ENCODE measurements at regions of chr9 and their contacts with region 1.

Region 1: DNA sequence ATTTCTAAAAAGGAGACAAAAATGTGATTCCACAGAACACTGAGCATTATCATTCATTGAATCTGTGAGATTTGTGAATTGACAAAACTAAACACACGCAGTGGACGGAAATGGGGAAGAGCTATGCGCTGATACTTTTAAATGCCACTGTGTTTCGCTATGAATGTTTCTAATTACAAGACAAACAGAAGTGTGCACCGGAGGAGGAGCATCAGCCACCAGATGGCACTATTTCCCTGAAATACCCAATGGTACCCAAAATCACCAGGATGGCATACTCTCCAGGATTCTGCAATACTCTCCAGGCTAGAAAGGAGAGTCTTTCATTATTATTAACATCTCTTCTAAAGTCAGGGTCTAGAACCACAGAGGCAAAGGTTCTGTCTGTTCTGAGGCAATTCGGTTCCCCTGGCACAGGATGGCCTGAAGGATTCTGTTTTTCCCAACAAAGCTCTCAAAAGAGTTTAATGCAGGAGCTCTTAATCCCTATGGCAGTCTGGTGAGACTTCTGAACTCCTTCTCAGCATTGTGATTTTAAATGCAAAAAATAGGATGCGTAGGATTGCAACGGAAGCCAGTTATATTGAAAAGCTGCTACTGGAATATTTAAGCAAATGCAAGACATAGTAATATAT is 13.8 kb upstream of the PUM3 start:
- DNase-seq: peak; percentile 76
- H3K4me3 ChIP-seq: peak overlapping the region in 1 of 2 experiments; percentile 34; a peak in 1 of 4 replicates
- H3K27ac ChIP-seq: no peak overlapping the region
- H3K4me1 ChIP-seq: no peaks in the 10 kb centered on the region
- H3K27me3 ChIP-seq: peaks cover 22% of the 10 kb centered on the region
- CTCF ChIP-seq: peak; percentile 92
- EP300 ChIP-seq: no peak
- RAD21 ChIP-seq: peak; percentile 88

Region 2: DNA sequence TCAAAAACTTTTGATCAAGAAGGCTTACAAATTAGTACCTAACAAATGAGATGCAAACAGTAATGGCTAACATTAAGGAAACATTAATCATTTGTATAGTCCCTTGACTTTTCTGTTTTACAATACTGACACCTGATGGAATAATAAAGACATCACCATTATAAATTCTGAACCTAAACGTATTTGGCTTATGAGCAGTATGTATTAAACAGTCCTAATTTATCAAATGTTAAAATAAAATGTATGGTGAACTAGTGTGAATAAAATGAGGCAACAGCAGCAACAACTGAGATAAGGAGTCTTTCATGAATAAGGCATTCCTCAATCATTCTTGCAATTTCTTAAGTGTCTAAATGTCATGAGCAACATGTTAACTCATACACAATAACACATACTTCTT is 19.8 kb before region 1 on chr9:
- CTCF ChIA-PET with region 1: interaction called, 41 read pairs
- POLR2A ChIA-PET with region 1: no interaction called
- DNase-seq: peak; percentile 12
- H3K4me3 ChIP-seq: no peak overlapping the region
- H3K27ac ChIP-seq: no peak overlapping the region
- H3K4me1 ChIP-seq: peaks cover 13 to 23% of the 10 kb centered on the region in 2 experiments; a peak in 3 of 4 replicates
- H3K27me3 ChIP-seq: no peaks in the 10 kb centered on the region
- CTCF ChIP-seq: peak; percentile 58
- EP300 ChIP-seq: no peak
- RAD21 ChIP-seq: peak; percentile 58

Region 3: DNA sequence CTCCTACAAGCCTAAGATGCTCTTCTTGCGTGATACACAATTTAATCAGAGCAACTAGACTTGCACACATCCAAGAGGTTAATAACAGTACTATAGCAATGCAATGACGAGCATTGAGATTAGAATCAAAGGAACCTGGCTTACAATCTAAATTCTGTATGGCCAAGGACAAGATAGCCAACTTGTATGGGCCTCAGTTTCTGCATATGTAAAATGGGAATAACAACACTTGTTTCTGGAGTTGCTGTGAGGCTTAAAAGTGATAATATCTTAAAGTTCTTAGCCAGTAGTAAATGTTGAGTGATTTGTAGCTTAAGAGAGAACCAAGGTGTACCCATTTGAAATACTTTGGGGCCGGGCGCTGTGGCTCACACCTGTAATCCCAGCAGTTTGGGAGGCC is 11.6 kb before region 1 on chr9:
- CTCF ChIA-PET with region 1: interaction called, 41 read pairs
- POLR2A ChIA-PET with region 1: no interaction called
- DNase-seq: no peak
- H3K4me3 ChIP-seq: no peak overlapping the region
- H3K27ac ChIP-seq: no peak overlapping the region
- H3K4me1 ChIP-seq: peaks cover 21 to 23% of the 10 kb centered on the region in 2 experiments; a peak in 3 of 4 replicates
- H3K27me3 ChIP-seq: no peaks in the 10 kb centered on the region
- CTCF ChIP-seq: no peak
- EP300 ChIP-seq: no peak
- RAD21 ChIP-seq: no peak

Region 4: GRCh38 chr9:2872257-2872935 is 14.7 kb after region 1 on chr9:
- CTCF ChIA-PET with region 1: interaction called, 22 read pairs
- POLR2A ChIA-PET with region 1: no interaction called
- DNase-seq: peak; percentile 27
- H3K4me3 ChIP-seq: no peak overlapping the region
- H3K27ac ChIP-seq: no peak overlapping the region
- H3K4me1 ChIP-seq: no peaks in the 10 kb centered on the region
- H3K27me3 ChIP-seq: peaks cover 28% of the 10 kb centered on the region; the same call in 1 of the 2 replicates
- CTCF ChIP-seq: peak; percentile 52
- EP300 ChIP-seq: no peak
- RAD21 ChIP-seq: peak; percentile 58

Region 5: DNA sequence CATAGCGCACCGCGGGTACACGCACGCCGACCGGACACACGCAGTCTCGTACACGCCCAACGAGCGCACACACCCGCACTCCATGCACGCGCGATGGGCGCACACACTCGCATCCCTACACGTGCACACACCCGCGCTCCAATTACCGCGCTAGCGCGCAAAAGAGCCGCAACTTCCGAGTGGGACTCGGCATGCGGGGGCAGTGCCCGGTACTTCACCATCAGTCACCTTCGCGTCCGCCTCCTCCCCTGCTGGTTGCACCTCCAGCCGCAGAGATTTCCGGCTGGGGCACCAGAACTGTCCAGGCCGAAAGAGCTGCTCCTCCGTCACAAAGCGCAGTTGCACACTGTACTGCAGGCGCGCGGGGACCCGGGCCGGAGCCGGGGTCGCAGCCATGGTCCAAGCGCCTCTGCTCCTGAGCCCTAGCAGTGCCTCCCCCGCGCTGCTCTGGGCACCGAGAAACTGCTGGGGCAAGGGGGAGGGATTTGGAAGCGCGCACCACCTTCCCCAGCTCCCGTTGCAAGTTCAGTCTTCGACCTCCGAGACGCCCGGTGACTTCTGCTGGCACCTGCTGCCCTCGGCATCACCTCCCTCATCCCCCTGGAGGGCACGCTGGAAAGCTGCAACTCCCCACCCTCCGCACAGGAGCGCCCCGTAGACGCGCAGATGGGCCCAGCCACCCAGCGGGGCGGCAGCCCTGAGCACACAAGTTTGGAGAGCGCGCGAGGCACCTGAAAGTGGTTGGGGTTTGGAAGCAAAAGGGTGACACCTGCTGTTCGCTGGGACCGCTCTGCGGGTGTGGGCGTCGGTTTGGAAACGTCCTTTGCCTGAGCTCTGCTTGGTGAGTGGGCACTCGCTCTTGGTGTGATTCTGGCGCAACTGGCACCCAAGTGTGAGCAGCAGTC is 323.6 kb after region 1 on chr9:
- CTCF ChIA-PET with region 1: interaction called, 13 read pairs
- POLR2A ChIA-PET with region 1: no interaction called
- DNase-seq: peak; percentile 39
- H3K4me3 ChIP-seq: peak overlapping the region in 1 of 2 experiments; percentile 19; a peak in 2 of 4 replicates
- H3K27ac ChIP-seq: no peak overlapping the region
- H3K4me1 ChIP-seq: no peaks in the 10 kb centered on the region
- H3K27me3 ChIP-seq: peaks cover 27% of the 10 kb centered on the region; the same call in 1 of the 2 replicates
- CTCF ChIP-seq: 0 out of 2 replicates have a peak, but pooled peaks have one; percentile 27
- EP300 ChIP-seq: no peak
- RAD21 ChIP-seq: peak; percentile 44

Region 6: DNA sequence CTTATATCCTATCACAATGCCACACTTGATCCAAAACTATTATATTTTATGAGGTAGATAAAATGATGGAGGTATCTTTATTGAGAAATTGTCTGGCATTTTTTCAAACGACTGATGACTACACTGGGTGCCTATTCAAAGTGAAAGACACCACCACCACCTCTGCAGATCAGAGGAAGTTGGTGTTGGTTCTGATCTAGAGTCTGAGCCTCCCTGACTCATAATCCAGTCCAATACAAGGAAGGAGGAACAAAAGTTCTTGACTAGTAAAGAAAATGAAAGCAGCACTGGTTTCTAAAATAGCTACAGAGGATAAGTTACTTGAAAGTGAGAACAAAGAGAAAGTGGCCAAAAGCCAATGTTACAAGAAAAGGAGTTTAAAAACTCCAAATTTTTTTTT is 528.2 kb after region 1 on chr9:
- CTCF ChIA-PET with region 1: no interaction called
- POLR2A ChIA-PET with region 1: no interaction called
- DNase-seq: no peak
- H3K4me3 ChIP-seq: no peak overlapping the region
- H3K27ac ChIP-seq: no peak overlapping the region
- H3K4me1 ChIP-seq: no peaks in the 10 kb centered on the region
- H3K27me3 ChIP-seq: no peaks in the 10 kb centered on the region
- CTCF ChIP-seq: no peak
- EP300 ChIP-seq: no peak
- RAD21 ChIP-seq: no peak

Region 7: DNA sequence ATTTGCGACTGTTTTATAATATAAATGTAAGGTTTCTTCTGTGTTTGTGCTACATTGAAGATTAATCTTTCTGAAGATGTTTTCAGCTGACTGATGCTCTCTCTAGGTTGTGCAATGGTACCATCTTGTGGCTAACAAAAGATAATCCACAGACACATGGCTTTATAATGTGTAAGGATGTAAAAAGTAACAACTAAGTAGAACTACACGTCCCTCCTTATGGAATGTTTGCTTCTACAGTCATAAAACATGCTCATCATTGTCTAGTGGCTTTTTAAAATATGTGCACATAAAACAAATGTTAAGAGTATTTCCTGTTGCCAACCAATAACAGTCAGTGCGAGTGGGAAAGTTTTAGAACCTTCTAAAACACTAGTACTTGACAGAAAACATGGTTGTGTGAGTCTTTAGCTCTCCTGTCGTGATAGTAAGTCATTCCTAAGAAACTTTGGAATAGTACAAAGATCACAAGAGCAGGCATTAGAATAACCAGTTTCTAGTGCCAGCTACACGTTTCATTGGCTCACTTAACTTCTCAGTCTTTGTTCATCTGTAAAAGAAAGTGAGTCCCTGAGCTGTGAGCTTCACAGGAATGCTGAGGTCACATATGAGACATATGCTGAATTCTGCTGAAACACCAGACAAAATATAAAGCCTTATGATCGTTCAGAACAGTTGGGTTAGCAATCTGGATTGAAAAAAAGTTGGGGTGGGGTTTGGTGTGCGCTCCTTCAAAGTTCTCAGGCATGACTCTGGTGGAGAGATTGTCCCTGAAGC is 1517.9 kb after region 1 on chr9:
- CTCF ChIA-PET with region 1: interaction called, 14 read pairs
- POLR2A ChIA-PET with region 1: no interaction called
- DNase-seq: peak; percentile 27
- H3K4me3 ChIP-seq: no peak overlapping the region
- H3K27ac ChIP-seq: peak overlapping the region in 1 of 2 experiments; percentile 63; a peak in 2 of 4 replicates
- H3K4me1 ChIP-seq: no peaks in the 10 kb centered on the region; a peak in 1 of 4 replicates
- H3K27me3 ChIP-seq: no peaks in the 10 kb centered on the region
- CTCF ChIP-seq: peak; percentile 80
- EP300 ChIP-seq: no peak
- RAD21 ChIP-seq: peak; percentile 89

Measured in SK-N-SH (cell line).